CD8-positive, alpha-beta memory T cell (primary cell): ENCODE measurements at regions of chr7 and their contacts with region 1.

Region 1: GRCh38 chr7:30276203-30276900 is 8.0 kb upstream of the ZNRF2 start:
- DNase-seq: peak; percentile 15 to 68 (median 32)
- H3K4me3 ChIP-seq: no peak overlapping the region
- H3K4me3 Mint-ChIP-seq: no peak overlapping the region
- H3K27ac ChIP-seq: no peak overlapping the region
- H3K27ac Mint-ChIP-seq: no peak overlapping the region
- H3K4me1 ChIP-seq: no peaks in the 10 kb centered on the region
- H3K4me1 Mint-ChIP-seq: peaks cover 7 to 13% (median 12%) of the 10 kb centered on the region in 3 donors
- H3K27me3 ChIP-seq: no peaks in the 10 kb centered on the region
- H3K27me3 Mint-ChIP-seq: peaks cover 0 to 2% of the 10 kb centered on the region in 2 donors

Region 2: DNA sequence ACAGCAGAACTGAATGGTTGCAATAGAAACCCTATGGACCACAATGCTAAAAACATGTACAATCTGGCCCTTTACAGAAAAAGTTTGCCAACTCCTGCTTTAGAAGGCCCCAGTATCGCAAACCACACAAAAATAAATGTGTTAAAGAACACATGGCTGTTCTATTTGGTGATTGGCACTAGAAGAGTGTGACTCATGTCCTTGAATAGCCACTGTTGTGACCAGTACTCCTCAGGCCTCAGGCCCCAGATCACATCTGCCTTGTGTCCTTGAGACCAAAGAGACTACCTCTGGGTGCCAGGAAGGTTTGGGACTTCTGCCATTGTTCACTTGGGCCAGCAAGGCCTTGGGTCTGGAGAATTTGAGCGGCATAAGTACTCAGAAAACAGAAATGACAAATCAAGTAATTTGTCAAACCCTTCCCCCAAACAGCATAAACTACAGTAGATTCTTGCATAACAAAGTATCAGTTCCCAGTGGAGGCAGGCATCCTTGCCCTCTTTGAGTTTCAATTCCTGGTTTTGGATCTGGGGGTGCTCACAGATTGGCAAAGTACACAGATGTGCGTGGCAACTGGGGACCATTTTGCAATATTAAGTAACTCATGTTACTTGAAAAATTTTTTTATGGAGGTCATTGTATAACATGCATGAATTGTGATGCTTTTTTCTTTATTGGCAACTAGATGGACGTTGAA is 91.4 kb before region 1 on chr7:
- CTCF ChIA-PET with region 1: no interaction called
- POLR2A ChIA-PET with region 1: no interaction called
- DNase-seq: no peak
- H3K4me3 ChIP-seq: no peak overlapping the region
- H3K4me3 Mint-ChIP-seq: no peak overlapping the region
- H3K27ac ChIP-seq: no peak overlapping the region
- H3K27ac Mint-ChIP-seq: no peak overlapping the region
- H3K4me1 ChIP-seq: no peaks in the 10 kb centered on the region
- H3K4me1 Mint-ChIP-seq: peaks cover 0 to 2% (median 0%) of the 10 kb centered on the region in 3 donors
- H3K27me3 ChIP-seq: no peaks in the 10 kb centered on the region
- H3K27me3 Mint-ChIP-seq: peaks cover 0 to 2% of the 10 kb centered on the region in 2 donors

Region 3: DNA sequence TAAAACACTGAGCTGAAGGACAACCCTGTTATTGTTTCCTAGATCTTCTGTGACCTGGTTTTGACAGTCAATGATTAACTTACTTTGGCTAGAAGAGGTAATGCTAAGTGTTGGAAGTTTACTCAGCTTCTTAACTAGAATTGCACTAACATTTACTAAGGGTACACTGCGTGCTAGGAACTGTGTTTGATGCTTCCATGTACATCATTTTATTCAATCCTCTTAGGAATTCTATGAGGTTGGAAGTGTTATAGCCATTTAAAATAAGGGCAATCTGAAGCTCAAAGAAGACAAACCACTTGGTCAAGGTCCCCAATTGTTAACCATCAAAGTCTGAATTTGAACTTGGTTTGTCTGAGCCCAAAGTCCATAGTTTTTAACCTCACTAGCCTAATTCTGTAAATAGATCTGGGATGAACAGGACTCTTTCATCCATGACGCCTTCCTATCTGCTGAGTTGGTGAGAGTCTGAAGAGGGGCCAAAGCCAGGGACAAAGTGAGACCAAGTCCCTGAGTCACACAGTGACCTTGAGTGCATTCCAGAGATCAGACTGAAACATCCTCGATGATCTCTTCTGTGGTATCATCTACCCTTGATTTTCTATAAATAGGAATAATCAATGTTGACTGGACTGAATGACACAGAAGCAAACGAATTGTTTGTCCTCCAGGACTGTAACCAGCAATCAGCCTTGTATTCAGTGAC is 21.1 kb before region 1 on chr7:
- CTCF ChIA-PET with region 1: no interaction called
- POLR2A ChIA-PET with region 1: no interaction called
- DNase-seq: no peak
- H3K4me3 ChIP-seq: no peak overlapping the region
- H3K4me3 Mint-ChIP-seq: no peak overlapping the region
- H3K27ac ChIP-seq: no peak overlapping the region
- H3K27ac Mint-ChIP-seq: no peak overlapping the region
- H3K4me1 ChIP-seq: no peaks in the 10 kb centered on the region
- H3K4me1 Mint-ChIP-seq: peaks cover 6 to 12% (median 7%) of the 10 kb centered on the region in 3 donors
- H3K27me3 ChIP-seq: no peaks in the 10 kb centered on the region
- H3K27me3 Mint-ChIP-seq: no peaks in the 10 kb centered on the region

Region 4: GRCh38 chr7:30412810-30413504 is 136.6 kb after region 1 on chr7:
- CTCF ChIA-PET with region 1: interaction called, 11 read pairs
- POLR2A ChIA-PET with region 1: no interaction called
- DNase-seq: peak in 2 of 5 donors; percentile 14 to 18
- H3K4me3 ChIP-seq: no peak overlapping the region
- H3K4me3 Mint-ChIP-seq: no peak overlapping the region
- H3K27ac ChIP-seq: no peak overlapping the region
- H3K27ac Mint-ChIP-seq: no peak overlapping the region
- H3K4me1 ChIP-seq: no peaks in the 10 kb centered on the region
- H3K4me1 Mint-ChIP-seq: no peaks in the 10 kb centered on the region
- H3K27me3 ChIP-seq: no peaks in the 10 kb centered on the region
- H3K27me3 Mint-ChIP-seq: no peaks in the 10 kb centered on the region

Region 5: DNA sequence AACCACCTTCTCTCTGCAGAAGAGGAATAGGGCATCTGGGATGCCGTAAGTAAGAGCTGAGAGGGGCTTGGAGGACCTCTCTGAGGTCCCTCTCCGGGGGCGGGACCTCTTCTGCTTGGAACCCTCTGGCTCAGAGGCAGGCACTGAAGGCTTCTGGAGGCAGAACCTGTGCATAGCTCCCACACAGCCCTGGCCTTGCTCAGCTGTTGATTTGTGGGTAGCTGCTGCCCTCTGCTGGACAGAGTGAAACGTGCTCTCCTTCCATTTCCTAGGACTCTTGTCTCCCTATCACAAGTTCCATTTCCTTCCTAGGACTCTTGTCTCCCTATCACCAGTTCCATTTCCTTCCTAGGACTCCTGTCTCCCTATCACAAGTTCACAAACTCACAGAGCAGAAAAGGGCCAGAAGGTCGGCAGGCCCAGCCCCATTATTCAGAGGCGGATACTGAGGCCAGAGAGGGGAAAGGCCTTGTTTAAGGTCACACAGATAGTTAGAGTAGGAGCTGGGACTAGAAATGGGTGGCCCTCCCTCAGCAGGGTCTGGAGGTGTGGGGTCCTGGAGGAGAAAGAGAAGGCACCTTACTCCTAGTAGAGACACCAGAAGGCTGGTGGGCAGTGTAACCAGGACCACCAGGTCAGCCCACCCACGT is 288.0 kb after region 1 on chr7:
- CTCF ChIA-PET with region 1: interaction called, 21 read pairs
- POLR2A ChIA-PET with region 1: no interaction called
- DNase-seq: peak; percentile 52 to 78 (median 62)
- H3K4me3 ChIP-seq: no peak overlapping the region
- H3K4me3 Mint-ChIP-seq: no peak overlapping the region
- H3K27ac ChIP-seq: no peak overlapping the region
- H3K27ac Mint-ChIP-seq: peak overlapping the region in 2 of 8 donors; percentile 2 to 53
- H3K4me1 ChIP-seq: no peaks in the 10 kb centered on the region
- H3K4me1 Mint-ChIP-seq: peaks cover 0 to 2% (median 0%) of the 10 kb centered on the region in 3 donors
- H3K27me3 ChIP-seq: no peaks in the 10 kb centered on the region
- H3K27me3 Mint-ChIP-seq: no peaks in the 10 kb centered on the region